Posterior vena cava (tissue), 2 donors: ENCODE measurements at regions of chr15 and their contacts with region 1.

Region 1: GRCh38 chr15:38176155-38176554 is 76.5 kb upstream of the SPRED1 start:
- DNase-seq: no peak

Region 2: DNA sequence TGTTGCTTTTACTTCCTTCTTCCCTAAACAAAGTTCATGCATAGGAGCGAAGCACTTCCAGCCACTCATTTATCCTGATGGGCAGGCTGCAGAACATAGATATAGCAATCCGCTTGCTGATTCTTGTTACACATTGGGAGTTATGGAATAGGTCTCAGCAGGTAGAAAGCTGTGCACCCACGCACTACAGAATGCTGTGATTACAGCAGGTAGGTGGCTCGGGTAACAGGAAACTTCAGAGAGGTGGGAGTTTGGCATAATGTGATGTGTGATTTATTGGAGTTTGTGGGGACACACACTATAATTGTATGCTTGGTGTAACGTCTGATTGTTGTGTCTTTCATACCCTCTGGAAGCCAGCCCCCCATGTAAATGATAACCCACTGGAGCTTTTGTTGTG is 976.6 kb before region 1 on chr15:
- intact Hi-C with region 1: no loop called
- DNase-seq: no peak

Region 3: DNA sequence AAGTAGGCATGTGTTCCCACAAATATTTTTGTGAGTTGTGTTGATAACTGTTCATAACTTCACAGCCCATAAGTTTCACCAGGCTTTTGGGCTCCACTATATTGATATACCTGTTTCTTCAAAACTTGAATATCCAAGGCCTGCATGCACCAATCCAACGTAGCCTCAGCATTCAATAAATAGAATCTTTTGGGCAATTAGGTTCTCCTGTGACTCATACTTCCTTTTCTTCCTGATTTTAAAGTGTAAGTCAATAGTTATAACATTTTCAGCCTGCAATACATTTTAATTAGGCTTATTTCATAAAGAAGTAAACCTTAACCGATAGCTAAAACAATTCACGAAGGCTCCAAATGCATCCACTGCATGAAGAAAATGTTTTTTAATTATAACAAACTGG is 21.3 kb before region 1 on chr15:
- intact Hi-C with region 1: loop called in 1 of 2 experiments (anchors 1 kb)
- DNase-seq: no peak

Region 4: GRCh38 chr15:38217191-38217595 is 41.0 kb after region 1 on chr15:
- intact Hi-C with region 1: no loop called
- DNase-seq: no peak

Region 5: GRCh38 chr15:38297623-38298388 is 121.7 kb after region 1 on chr15:
- intact Hi-C with region 1: no loop called
- DNase-seq: no peak